Dendritic cell treated with granulocyte-macrophage colony-stimulating factor and Interleukin-4, amounts not matched to agents 40 ng/mL and 50 ng/mL, for 4 days (primary cell): ENCODE measurements at regions of chrX and their contacts with region 1.

Region 1: DNA sequence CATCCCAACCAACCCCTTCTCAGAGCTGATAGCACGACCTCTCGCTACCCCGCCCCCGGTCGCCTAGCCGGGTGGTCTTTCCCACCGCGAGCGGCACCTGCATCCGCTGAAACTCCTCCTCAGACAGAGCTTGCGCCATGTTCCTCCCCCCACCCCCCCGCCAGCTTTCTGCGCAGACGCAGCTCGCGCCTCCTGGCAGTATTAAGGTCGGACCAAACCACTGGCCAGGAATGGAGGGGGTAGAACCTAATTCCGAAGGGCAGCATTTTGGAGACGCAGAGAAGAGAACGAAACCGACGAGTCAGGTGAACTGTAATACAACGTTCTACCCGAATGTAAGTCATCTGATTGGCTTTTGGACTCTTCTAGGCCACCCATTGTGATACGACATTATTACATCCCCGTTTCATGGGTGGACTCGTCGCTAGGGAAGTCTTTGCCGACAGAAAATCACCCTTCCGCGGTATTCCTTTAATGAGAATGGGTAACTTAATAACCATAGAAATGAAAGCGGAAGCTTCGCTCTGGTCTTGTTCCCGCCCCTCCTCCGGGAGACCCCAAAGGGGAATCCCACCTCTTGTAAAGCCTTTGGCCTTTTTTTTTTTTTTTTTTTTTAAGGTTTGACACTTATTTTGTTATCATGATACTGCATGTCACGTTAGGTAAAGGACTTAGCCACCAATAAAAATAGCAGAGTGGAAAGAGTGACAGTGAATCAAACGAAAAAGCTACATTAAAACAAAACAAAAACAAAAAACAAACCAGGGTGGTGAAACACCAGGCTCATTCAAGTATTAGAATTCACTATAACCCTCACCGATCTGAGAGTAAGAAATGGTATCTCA is at the start of gene GRIPAP1:
- H3K4me3 Mint-ChIP-seq: peak within 1 kb of the TSS; percentile 98
- H3K27ac Mint-ChIP-seq: peak within 1 kb of the TSS; percentile 93
- H3K4me1 Mint-ChIP-seq: peaks cover 37% of the 10 kb centered on the region
- H3K27me3 Mint-ChIP-seq: no peaks in the 10 kb centered on the region

Region 2: DNA sequence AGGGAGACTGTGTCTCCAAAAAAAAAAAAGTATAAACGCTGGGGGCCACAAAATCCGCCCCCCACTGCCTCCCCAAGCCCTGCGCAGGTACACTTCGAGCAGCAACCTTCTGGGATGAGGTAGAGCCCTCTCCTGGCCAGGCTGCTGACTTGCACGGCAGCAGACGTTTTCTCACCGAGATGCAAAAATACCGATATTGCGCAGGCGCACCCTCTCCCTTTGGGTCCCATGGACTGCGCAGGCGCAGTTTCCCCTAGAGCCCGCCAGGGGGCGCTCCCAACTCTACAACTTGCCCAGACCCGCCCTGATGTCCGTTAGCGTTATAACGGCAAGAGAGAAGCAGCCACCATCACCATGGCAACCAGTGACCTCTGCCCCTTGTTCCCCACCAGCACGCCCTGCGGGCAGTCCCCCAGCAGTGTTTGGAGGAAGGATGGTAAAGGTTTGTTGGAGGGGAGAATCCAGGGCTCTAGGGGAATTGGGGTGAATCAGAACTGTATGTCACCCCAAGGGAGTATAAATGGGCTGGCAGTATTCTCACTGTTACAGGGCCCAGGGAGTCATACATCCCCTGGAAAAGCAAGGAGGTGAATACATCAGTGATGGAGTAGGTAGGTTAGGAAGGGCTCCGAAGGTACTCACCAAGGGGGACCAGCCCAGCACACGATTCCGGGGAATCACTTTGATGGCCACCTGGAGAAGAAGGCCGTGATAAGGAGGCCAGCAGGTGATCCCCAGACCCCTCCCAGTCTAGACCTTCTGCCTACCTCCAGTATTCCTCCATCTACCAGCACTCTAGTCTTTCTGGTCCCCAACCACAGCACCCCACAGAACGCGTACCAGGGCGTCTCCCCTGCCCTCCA is 84.9 kb before region 1 on chrX:
- intact Hi-C with region 1: no loop called
- H3K4me3 Mint-ChIP-seq: peak overlapping the region; percentile 90
- H3K27ac Mint-ChIP-seq: peak overlapping the region; percentile 92
- H3K4me1 Mint-ChIP-seq: peaks cover 54% of the 10 kb centered on the region
- H3K27me3 Mint-ChIP-seq: no peaks in the 10 kb centered on the region

Region 3: DNA sequence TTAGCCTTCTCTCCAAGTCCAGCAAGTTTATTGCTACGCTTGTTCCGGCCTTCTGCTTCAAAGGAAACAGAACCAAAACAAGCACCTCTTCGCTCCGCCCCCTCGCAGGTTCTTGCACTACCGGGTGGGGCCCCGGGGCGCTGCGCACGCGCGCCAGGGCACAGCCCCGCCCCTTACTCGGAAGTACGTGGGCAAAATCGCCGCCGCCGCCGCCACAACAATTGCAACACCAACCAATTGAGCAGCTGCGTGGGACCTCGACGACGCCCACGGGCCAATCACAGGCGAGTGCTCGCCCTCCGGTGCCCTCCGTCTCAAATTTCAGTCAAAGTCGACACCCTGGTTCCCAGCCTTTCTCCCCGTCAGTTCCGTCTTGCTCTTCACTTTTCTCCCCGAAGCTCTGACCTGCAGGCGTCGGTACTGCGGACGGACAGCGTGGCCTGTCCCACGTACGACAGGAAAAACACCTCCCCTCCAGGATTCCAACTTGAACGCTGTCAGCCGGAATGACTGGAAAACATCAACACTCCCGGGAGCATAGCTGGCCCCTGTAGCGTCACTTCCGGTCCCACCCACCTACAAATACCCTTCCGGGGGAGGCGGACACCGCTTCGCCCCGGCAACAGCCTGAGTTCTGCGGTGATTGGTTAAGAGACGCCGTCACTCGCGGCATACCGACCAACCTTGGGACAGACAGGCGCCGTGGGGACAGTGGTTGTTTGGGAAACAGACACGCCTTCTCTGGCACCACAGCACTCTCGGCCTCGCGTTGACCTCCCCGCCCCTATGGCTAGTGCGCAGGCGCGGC is 44.3 kb before region 1 on chrX:
- intact Hi-C with region 1: loop called (anchors 2 kb)
- H3K4me3 Mint-ChIP-seq: peak overlapping the region; percentile 98
- H3K27ac Mint-ChIP-seq: peak overlapping the region; percentile 100
- H3K4me1 Mint-ChIP-seq: peaks cover 47% of the 10 kb centered on the region
- H3K27me3 Mint-ChIP-seq: no peaks in the 10 kb centered on the region

Region 4: DNA sequence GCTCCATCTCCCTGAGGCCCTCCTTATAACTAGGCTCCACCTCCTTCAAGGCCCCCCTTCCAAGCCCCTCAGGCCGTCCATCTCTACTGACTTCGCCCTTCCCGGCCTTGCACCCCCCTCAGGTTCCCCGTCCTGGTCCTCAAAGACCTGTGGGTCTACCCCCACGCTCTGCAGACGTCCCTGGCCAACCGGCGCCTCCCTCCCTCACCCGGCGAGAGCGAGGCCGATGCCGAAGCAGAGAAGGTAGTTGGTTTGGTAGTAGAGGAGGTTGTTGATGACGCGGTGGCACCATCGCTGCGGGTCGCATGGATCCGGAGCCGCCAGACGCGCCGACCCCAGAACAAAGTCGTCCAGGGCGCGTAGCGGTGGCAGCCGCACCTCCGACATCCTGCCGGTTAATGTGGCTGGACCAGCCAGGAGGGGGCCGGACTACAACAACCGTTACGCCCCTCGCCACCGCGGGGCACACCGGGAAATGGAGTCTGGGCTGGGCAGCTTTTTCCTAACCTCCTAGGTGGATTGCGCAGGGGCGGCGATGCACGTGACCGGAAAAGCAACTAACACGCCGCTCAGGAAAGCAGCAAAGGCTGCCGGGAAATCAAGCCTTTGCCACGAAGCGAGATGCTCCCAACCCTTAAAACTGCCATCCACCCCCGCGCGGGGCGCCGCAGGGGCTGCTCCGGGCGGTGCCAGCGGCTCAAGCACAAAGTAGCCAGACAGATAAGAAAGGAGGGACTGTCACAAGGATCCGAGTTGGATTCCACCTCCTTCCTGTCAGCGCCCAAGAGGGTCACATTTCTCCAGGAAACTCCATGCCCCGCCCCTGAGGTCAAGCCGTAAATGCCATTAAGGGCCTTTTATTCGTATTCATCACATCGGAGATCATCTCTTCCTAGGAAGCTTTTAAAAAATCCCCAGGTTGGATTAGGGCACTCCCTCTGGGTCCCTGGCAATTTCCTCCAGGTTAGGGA is 71.6 kb after region 1 on chrX and contains the start of gene PRAF2:
- intact Hi-C with region 1: no loop called
- H3K4me3 Mint-ChIP-seq: peak within 1 kb of the TSS; percentile 72
- H3K27ac Mint-ChIP-seq: peak within 1 kb of the TSS; percentile 72
- H3K4me1 Mint-ChIP-seq: peaks cover 20% of the 10 kb centered on the region
- H3K27me3 Mint-ChIP-seq: peaks cover 17% of the 10 kb centered on the region